ENCODE measurements at regions of chrX and their contacts with region 1.

Region 1: DNA sequence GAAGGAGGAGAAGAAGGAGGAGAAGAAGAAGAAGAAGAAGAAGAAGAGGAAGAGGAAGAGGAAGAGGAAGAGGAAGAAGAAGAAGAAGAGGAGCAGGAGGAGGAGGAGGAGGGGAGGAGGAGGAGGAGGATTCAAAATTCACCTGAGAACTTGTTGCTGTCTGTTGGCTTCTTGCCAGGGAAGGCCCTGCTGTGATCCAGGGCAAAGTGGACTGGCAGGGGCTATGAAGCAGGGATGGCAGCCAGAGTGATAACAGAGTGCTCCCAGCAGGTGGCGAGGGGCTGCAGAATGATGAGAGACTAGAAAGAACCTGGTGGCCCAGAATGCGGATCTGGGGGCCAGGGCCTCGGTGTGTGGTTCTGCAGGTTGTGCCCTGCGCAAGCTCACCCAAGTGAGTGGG is 82.7 kb downstream of the RTL5 start:
- DNase-seq: peak; percentile 18 to 43
- ATAC-seq: peak in 2 of 3 donors; percentile 52 to 54
- H3K4me3 ChIP-seq: no peak overlapping the region
- H3K4me3 Mint-ChIP-seq: no peak overlapping the region
- H3K27ac ChIP-seq: no peak overlapping the region
- H3K27ac Mint-ChIP-seq: peak overlapping the region in 1 of 2 donors; percentile 21
- H3K4me1 ChIP-seq: peaks cover 11% of the 10 kb centered on the region
- H3K4me1 Mint-ChIP-seq: peaks cover 15 to 24% of the 10 kb centered on the region in 2 donors
- H3K27me3 ChIP-seq: no peaks in the 10 kb centered on the region
- H3K27me3 Mint-ChIP-seq: peaks cover 5 to 46% of the 10 kb centered on the region in 2 donors
- CTCF ChIP-seq: no peak

Region 2: GRCh38 chrX:72107320-72107719 is 58.4 kb after region 1 on chrX:
- intact Hi-C with region 1: no loop called
- DNase-seq: peak in 1 of 2 donors; percentile 50
- ATAC-seq: peak in 2 of 3 donors; percentile 18 to 39
- H3K4me3 ChIP-seq: no peak overlapping the region
- H3K4me3 Mint-ChIP-seq: peak overlapping the region; percentile 38
- H3K27ac ChIP-seq: peak overlapping the region; percentile 50
- H3K27ac Mint-ChIP-seq: peak overlapping the region; percentile 68 to 82
- H3K4me1 ChIP-seq: peaks cover 75% of the 10 kb centered on the region
- H3K4me1 Mint-ChIP-seq: peaks cover 36 to 55% of the 10 kb centered on the region in 2 donors
- H3K27me3 ChIP-seq: no peaks in the 10 kb centered on the region
- H3K27me3 Mint-ChIP-seq: peaks cover 3 to 14% of the 10 kb centered on the region in 2 donors
- CTCF ChIP-seq: no peak

Region 3: DNA sequence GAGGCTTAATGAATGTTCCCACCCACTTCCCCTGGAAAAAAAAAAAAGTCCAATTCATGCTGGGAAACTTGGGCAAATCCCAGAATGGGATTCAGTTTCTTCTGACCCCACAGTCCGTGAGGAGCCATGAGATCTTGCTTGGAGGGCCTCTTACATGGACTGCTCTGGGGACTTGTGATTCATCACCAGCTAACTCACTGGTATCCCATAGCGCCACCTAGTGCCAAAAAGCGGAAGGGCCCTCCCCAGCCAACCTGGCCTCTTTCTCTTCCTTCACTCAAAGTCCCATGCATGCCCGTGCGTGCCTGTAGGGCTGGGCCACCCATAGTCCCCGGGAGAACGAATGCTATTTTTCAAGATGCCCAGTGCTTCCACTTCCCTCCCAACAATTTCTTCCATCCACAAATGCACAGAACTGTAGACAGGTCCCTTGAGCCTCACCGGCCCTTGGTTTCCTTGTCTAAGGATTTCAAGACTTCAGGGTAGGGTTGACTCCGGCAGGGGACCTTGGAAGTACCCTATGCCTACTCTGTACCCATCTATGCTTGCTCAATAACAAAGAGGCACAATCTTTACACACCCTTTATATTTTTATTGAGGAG is 77.7 kb after region 1 on chrX:
- intact Hi-C with region 1: loop called (anchors 1 kb)
- DNase-seq: peak; percentile 77 to 86
- ATAC-seq: peak; percentile 75 to 81 (median 81)
- H3K4me3 ChIP-seq: no peak overlapping the region
- H3K4me3 Mint-ChIP-seq: peak overlapping the region; percentile 1
- H3K27ac ChIP-seq: no peak overlapping the region
- H3K27ac Mint-ChIP-seq: no peak overlapping the region
- H3K4me1 ChIP-seq: peaks cover 60% of the 10 kb centered on the region
- H3K4me1 Mint-ChIP-seq: peaks cover 51 to 60% of the 10 kb centered on the region in 2 donors
- H3K27me3 ChIP-seq: no peaks in the 10 kb centered on the region
- H3K27me3 Mint-ChIP-seq: peaks cover 2 to 25% of the 10 kb centered on the region in 2 donors
- CTCF ChIP-seq: peak; percentile 60

Region 4: DNA sequence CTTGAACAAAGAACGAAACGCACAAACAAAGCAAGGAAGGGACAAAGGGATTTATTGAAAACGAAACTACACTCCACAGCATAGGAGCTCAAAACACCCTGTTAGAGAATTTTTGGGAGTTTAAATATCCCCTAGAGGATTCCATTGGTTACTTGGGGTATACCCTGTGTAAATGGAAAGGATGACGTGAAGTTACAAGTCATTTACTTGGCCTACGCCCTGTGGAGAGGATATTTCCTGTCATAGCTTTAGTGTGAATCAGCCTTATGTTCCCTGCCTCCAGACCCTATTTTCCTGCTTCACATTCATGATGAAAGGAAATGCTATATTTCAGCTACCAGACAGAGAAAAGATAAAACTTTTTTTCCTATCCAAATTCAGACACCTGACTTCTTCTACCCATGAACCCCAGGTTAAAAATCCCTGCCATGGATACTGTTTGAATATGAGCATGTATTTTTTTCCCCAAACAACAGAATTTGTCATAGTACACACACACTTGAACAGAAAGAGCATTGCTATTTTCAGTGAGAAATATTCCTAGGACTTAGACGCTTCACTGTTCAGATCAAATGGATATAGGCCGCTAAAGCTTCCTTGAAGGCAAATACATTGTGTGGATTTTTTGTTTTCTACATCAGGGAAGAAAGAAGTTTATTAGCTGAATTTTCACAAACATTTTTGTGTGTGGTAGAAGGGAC is 153.0 kb after region 1 on chrX:
- intact Hi-C with region 1: no loop called
- DNase-seq: no peak
- ATAC-seq: no peak
- H3K4me3 ChIP-seq: no peak overlapping the region
- H3K4me3 Mint-ChIP-seq: no peak overlapping the region
- H3K27ac ChIP-seq: no peak overlapping the region
- H3K27ac Mint-ChIP-seq: no peak overlapping the region
- H3K4me1 ChIP-seq: no peaks in the 10 kb centered on the region
- H3K4me1 Mint-ChIP-seq: no peaks in the 10 kb centered on the region
- H3K27me3 ChIP-seq: no peaks in the 10 kb centered on the region
- H3K27me3 Mint-ChIP-seq: no peaks in the 10 kb centered on the region
- CTCF ChIP-seq: no peak

Region 5: GRCh38 chrX:72705814-72706213 is 656.8 kb after region 1 on chrX:
- intact Hi-C with region 1: no loop called
- DNase-seq: no peak
- ATAC-seq: no peak
- H3K4me3 ChIP-seq: no peak overlapping the region
- H3K4me3 Mint-ChIP-seq: no peak overlapping the region
- H3K27ac ChIP-seq: no peak overlapping the region
- H3K27ac Mint-ChIP-seq: no peak overlapping the region
- H3K4me1 ChIP-seq: no peaks in the 10 kb centered on the region
- H3K4me1 Mint-ChIP-seq: no peaks in the 10 kb centered on the region
- H3K27me3 ChIP-seq: no peaks in the 10 kb centered on the region
- H3K27me3 Mint-ChIP-seq: no peaks in the 10 kb centered on the region
- CTCF ChIP-seq: no peak